ENCODE measurements at regions of chr21 and their contacts with region 1.

Region 1: DNA sequence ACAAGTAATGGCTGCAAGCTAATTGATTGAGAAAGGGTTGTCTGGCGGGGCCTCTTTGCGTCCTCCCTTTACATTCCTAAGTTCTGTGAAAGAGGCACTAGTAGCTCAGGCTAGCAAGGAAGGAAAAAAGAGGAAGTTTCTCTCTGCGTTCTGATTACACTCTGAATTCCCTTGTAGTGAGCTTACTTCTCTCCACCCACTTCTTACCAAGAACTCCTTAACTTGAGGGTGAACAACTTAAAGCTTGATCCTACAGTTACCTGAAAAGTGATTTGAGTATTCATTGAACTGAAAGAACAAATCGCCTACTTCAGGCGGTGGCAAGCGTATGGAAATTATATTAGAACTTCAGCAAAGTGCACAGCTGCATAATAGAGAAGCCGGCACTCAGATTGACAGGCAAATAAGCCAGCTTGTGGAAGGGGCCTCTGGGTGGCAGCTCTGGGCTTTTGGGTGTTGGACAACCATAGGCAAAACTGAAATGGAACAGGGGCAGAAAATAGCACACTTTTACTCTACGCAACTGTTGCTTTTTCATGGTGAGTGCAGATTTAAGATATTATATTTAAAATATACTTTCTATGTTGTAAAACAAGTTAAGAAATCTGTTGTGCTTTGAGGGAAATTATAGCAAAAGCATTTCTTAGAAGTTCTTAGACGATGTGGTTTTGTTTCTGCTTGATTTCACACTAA is 464.5 kb downstream of the USP25 start:
- DNase-seq: peak; percentile 58 to 93 (median 82)

Region 2: GRCh38 chr21:16308269-16308668 is 114.0 kb after region 1 on chr21:
- intact Hi-C with region 1: loop called (anchors 10 kb)
- DNase-seq: no peak